Activated CD8-positive, alpha-beta T cell treated with anti-CD3 and anti-CD28 coated beads for 36 hours (primary cell): ENCODE measurements at regions of chr4 and their contacts with region 1.

Region 1: DNA sequence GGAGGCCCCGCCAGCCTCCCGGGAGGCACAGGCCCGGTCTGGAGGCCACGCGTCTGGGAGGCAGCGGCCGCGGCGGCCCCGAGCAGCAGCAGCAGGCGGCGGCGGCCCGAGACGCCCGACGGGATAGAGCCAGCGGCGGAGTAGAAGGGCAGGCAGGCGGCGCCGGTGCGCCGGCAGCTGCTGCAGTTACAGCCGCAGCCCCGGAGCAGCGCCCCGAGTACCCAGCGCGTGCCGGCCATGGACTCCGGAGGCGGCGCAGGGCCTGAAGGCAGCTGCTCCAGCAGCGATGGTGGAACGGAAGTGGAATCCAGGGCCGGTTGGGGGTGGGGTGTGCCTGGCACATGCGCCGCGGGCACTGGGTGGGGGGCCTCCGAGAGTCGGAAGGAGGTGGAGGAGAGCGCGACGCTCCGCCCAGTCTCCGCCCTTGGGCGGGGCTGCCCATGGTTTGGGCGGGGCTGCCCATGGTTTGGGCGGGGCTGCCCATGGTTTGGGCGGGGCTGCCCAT is at the start of gene GRSF1:
- DNase-seq: peak; percentile 97
- ATAC-seq: peak; percentile 89
- H3K4me3 Mint-ChIP-seq: peak within 1 kb of the TSS; percentile 92
- H3K27ac Mint-ChIP-seq: peak within 1 kb of the TSS; percentile 96
- H3K4me1 Mint-ChIP-seq: peaks cover 53% of the 10 kb centered on the region
- H3K27me3 Mint-ChIP-seq: no peaks in the 10 kb centered on the region
- CTCF ChIP-seq: no peak
- total RNA-seq, gene GRSF1: 111 to 117 TPM

Region 2: GRCh38 chr4:70687821-70688794 is 151.5 kb before region 1 on chr4 and contains the start of gene UTP3:
- CTCF ChIA-PET with region 1: interaction called, 6 read pairs
- POLR2A ChIA-PET with region 1: interaction called, 4 read pairs
- intact Hi-C with region 1: loop called (anchors 5 kb)
- DNase-seq: peak; percentile 95
- ATAC-seq: peak; percentile 92
- H3K4me3 Mint-ChIP-seq: peak within 1 kb of the TSS; percentile 97
- H3K27ac Mint-ChIP-seq: peak within 1 kb of the TSS; percentile 94
- H3K4me1 Mint-ChIP-seq: peaks cover 29% of the 10 kb centered on the region
- H3K27me3 Mint-ChIP-seq: no peaks in the 10 kb centered on the region
- CTCF ChIP-seq: peak; percentile 97
- total RNA-seq, gene UTP3: 31.0 to 33.5 TPM

Region 3: GRCh38 chr4:70704331-70705145 is 135.1 kb before region 1 on chr4:
- CTCF ChIA-PET with region 1: interaction called, 4 read pairs
- POLR2A ChIA-PET with region 1: interaction called, 7 read pairs
- intact Hi-C with region 1: loop called (anchors 5 kb)
- DNase-seq: peak; percentile 69
- ATAC-seq: peak; percentile 54
- H3K4me3 Mint-ChIP-seq: peak overlapping the region; percentile 85
- H3K27ac Mint-ChIP-seq: peak overlapping the region; percentile 92
- H3K4me1 Mint-ChIP-seq: peaks cover 22% of the 10 kb centered on the region
- H3K27me3 Mint-ChIP-seq: no peaks in the 10 kb centered on the region
- CTCF ChIP-seq: no peak

Region 4: GRCh38 chr4:70818173-70818855 is 21.3 kb before region 1 on chr4:
- CTCF ChIA-PET with region 1: interaction called, 3 read pairs
- POLR2A ChIA-PET with region 1: interaction called, 14 read pairs
- intact Hi-C with region 1: no loop called
- DNase-seq: no peak
- ATAC-seq: peak; percentile 27
- H3K4me3 Mint-ChIP-seq: no peak overlapping the region
- H3K27ac Mint-ChIP-seq: peak overlapping the region; percentile 44
- H3K4me1 Mint-ChIP-seq: peaks cover 17% of the 10 kb centered on the region
- H3K27me3 Mint-ChIP-seq: no peaks in the 10 kb centered on the region
- CTCF ChIP-seq: no peak

Region 5: GRCh38 chr4:70829492-70829891 is 10.1 kb before region 1 on chr4:
- CTCF ChIA-PET with region 1: interaction called, 5 read pairs
- POLR2A ChIA-PET with region 1: interaction called, 13 read pairs
- intact Hi-C with region 1: no loop called
- DNase-seq: no peak
- ATAC-seq: no peak
- H3K4me3 Mint-ChIP-seq: no peak overlapping the region
- H3K27ac Mint-ChIP-seq: no peak overlapping the region
- H3K4me1 Mint-ChIP-seq: peaks cover 8% of the 10 kb centered on the region
- H3K27me3 Mint-ChIP-seq: no peaks in the 10 kb centered on the region
- CTCF ChIP-seq: no peak

Region 6: GRCh38 chr4:70874268-70875156 is 34.9 kb after region 1 on chr4:
- CTCF ChIA-PET with region 1: no interaction called
- POLR2A ChIA-PET with region 1: no interaction called
- intact Hi-C with region 1: no loop called
- DNase-seq: no peak
- ATAC-seq: no peak
- H3K4me3 Mint-ChIP-seq: no peak overlapping the region
- H3K27ac Mint-ChIP-seq: no peak overlapping the region
- H3K4me1 Mint-ChIP-seq: no peaks in the 10 kb centered on the region
- H3K27me3 Mint-ChIP-seq: no peaks in the 10 kb centered on the region
- CTCF ChIP-seq: no peak

Region 7: GRCh38 chr4:70901984-70902576 is 62.4 kb after region 1 on chr4 and contains the start of gene MOB1B:
- CTCF ChIA-PET with region 1: interaction called, 6 read pairs
- POLR2A ChIA-PET with region 1: interaction called, 9 read pairs
- intact Hi-C with region 1: loop called (anchors 5 kb)
- DNase-seq: peak; percentile 93
- ATAC-seq: peak; percentile 95
- H3K4me3 Mint-ChIP-seq: peak within 1 kb of the TSS; percentile 94
- H3K27ac Mint-ChIP-seq: peak within 1 kb of the TSS; percentile 89
- H3K4me1 Mint-ChIP-seq: peaks cover 17% of the 10 kb centered on the region
- H3K27me3 Mint-ChIP-seq: no peaks in the 10 kb centered on the region
- CTCF ChIP-seq: peak; percentile 26
- total RNA-seq, gene MOB1B: 14.9 to 19.7 TPM

Region 8: GRCh38 chr4:70993181-70994068 is 153.8 kb after region 1 on chr4 and contains the start of gene DCK:
- CTCF ChIA-PET with region 1: interaction called, 3 read pairs
- POLR2A ChIA-PET with region 1: interaction called, 14 read pairs
- intact Hi-C with region 1: loop called (anchors 5 kb)
- DNase-seq: peak; percentile 86
- ATAC-seq: peak; percentile 81
- H3K4me3 Mint-ChIP-seq: peak within 1 kb of the TSS; percentile 94
- H3K27ac Mint-ChIP-seq: peak within 1 kb of the TSS; percentile 94
- H3K4me1 Mint-ChIP-seq: peaks cover 34% of the 10 kb centered on the region
- H3K27me3 Mint-ChIP-seq: no peaks in the 10 kb centered on the region
- CTCF ChIP-seq: no peak
- total RNA-seq, gene DCK: 33.6 to 37.2 TPM

Region 9: GRCh38 chr4:71009890-71010588 is 170.4 kb after region 1 on chr4:
- CTCF ChIA-PET with region 1: no interaction called
- POLR2A ChIA-PET with region 1: no interaction called
- intact Hi-C with region 1: no loop called
- DNase-seq: no peak
- ATAC-seq: peak; percentile 46
- H3K4me3 Mint-ChIP-seq: no peak overlapping the region
- H3K27ac Mint-ChIP-seq: peak overlapping the region; percentile 80
- H3K4me1 Mint-ChIP-seq: peaks cover 42% of the 10 kb centered on the region
- H3K27me3 Mint-ChIP-seq: no peaks in the 10 kb centered on the region
- CTCF ChIP-seq: peak; percentile 80